ENCODE measurements at regions of chr20 and their contacts with region 1.

Region 1: GRCh38 chr20:57622579-57623377 is 2.6 kb upstream of the ZBP1 start:
- DNase-seq: peak; percentile 86
- ATAC-seq: peak; percentile 10
- H3K4me3 Mint-ChIP-seq: peak overlapping the region; percentile 36
- H3K27ac Mint-ChIP-seq: peak overlapping the region; percentile 19
- H3K4me1 Mint-ChIP-seq: peaks cover 64% of the 10 kb centered on the region
- H3K27me3 Mint-ChIP-seq: no peaks in the 10 kb centered on the region

Region 2: DNA sequence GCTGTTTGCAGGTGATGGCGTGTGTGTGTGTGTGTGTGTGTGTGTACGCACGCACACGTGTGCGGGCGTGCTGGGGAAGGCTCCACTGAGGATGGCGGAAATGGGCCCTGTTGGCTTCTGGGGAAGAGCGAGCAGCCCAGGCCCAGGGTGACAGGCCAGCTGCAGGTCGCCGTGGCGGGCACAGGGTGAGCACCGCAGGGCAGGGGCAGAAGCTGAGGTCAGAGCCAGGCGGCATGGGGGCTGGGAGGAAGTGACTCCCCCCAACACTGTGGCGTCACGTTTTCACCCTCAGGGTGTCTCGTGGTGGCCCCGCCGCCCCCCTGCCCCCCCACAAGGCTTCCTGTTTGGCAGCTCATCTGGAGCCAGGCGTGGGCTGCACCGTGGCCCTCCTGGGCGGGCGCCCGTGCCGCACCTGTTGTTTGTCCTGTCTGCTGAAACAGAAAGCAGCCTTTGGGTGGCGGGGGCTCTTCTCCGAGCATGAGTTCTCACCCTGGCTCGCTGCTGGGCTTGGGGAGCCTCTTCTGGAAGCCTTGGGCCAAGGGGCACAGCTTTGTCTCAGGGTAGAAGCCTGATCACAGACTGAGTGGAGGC is 224.5 kb before region 1 on chr20:
- CTCF ChIA-PET with region 1: interaction called, 3 read pairs
- POLR2A ChIA-PET with region 1: no interaction called
- intact Hi-C with region 1: loop called in 1 of 2 experiments (anchors 1 kb)
- DNase-seq: peak; percentile 93
- ATAC-seq: peak; percentile 69
- H3K4me3 Mint-ChIP-seq: peak overlapping the region; percentile 74
- H3K27ac Mint-ChIP-seq: peak overlapping the region; percentile 99
- H3K4me1 Mint-ChIP-seq: peaks cover 92% of the 10 kb centered on the region
- H3K27me3 Mint-ChIP-seq: no peaks in the 10 kb centered on the region

Region 3: DNA sequence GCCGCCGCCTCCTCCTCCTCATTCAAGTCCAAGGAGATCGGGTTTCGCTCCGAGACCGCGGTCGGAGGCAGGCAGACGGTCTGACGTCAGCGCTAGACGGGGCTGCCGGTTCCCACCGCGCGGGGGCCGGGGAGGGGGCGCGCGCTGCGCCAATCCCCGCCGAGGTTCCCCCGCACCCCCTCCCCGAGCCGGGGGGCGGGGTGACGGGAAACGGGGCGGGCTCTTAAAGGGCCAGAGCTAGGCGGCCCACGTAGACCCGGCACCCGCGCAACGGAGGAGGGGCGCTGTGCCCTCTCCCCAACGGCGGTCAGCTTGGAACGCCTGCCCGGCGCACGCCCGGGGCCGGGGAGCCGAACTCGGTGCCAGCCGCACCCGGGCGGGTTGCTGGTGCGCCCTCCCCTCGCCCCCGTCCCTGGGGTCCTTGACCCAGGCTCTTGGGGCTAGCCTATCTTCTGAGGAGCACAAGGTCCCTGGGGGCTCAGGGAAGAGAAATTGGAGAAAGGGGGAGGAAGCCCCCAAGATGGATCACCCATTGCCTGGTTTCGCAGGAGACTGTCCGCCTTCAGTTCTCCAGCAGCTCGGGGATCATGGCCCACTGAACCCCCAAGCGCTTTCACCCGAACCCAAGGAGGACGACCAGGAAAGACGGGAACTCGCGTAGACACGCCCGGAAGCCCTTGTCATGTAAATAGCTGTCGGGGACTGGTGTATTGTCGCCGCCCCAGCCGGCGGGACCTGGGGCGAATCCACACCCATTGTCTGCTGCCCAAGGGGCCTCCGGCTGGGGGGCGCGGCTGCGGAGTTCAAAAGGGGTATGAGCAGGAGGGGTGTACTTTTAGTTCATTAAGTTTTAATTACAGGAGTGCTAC is 87.4 kb after region 1 on chr20 and contains the start of gene PMEPA1:
- CTCF ChIA-PET with region 1: interaction called, 5 read pairs
- POLR2A ChIA-PET with region 1: interaction called, 5 read pairs
- intact Hi-C with region 1: loop called in 1 of 2 experiments (anchors 2 kb)
- DNase-seq: peak; percentile 95
- ATAC-seq: peak; percentile 91
- H3K4me3 Mint-ChIP-seq: peak within 1 kb of the TSS; percentile 79
- H3K27ac Mint-ChIP-seq: peak within 1 kb of the TSS; percentile 77
- H3K4me1 Mint-ChIP-seq: peaks cover 20% of the 10 kb centered on the region
- H3K27me3 Mint-ChIP-seq: peaks cover 6% of the 10 kb centered on the region
- total RNA-seq, gene PMEPA1: 1.6 to 1.8 TPM

Region 4: DNA sequence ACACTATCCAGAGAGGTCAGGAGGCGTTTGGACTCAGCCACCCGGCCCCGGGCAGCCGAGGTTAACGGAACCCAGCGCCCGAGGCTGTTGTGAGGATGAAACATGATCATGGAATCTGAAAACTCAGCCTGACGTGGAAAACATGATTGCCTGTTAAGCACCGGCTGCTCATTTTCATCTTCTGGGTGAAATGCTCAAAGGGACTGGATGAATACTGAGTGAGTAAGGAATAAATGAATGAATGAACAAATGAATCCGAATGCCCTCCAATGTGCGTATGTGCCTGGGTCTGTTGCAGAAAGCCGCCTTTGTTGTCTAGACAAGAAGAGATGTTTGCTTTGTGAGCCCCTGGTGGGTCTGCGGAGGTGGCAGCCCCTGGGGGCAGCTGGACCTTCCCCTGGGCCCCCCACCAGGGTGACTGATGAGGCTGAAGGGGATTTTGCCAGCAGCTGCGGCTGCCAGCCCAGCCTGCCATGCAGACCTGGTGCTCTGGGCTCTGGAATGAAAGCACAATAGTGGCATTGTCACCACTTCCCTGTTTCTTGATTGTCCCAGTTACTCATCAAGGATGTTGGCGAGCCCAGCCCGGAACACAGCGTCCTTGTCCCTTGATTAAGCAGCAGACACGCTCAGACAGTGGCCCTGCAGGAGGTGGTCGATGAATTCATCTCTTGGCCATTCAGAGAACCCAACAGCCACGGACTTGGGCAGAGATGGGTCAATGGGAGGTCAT is 394.6 kb after region 1 on chr20:
- CTCF ChIA-PET with region 1: no interaction called
- POLR2A ChIA-PET with region 1: no interaction called
- intact Hi-C with region 1: loop called in 1 of 2 experiments (anchors 1 kb)
- DNase-seq: no peak
- ATAC-seq: no peak
- H3K4me3 Mint-ChIP-seq: no peak overlapping the region
- H3K27ac Mint-ChIP-seq: no peak overlapping the region
- H3K4me1 Mint-ChIP-seq: peaks cover 16% of the 10 kb centered on the region
- H3K27me3 Mint-ChIP-seq: peaks cover 16% of the 10 kb centered on the region

Region 5: GRCh38 chr20:58224974-58225373 is 602.2 kb after region 1 on chr20:
- CTCF ChIA-PET with region 1: interaction called, 4 read pairs
- POLR2A ChIA-PET with region 1: no interaction called
- intact Hi-C with region 1: loop called in 1 of 2 experiments (anchors 1 kb)
- DNase-seq: no peak
- ATAC-seq: no peak
- H3K4me3 Mint-ChIP-seq: no peak overlapping the region
- H3K27ac Mint-ChIP-seq: no peak overlapping the region
- H3K4me1 Mint-ChIP-seq: peaks cover 31% of the 10 kb centered on the region
- H3K27me3 Mint-ChIP-seq: peaks cover 53% of the 10 kb centered on the region

Region 6: GRCh38 chr20:58818585-58819285 is 1196.0 kb after region 1 on chr20:
- CTCF ChIA-PET with region 1: no interaction called
- POLR2A ChIA-PET with region 1: no interaction called
- intact Hi-C with region 1: loop called in 1 of 2 experiments (anchors 10 kb)
- DNase-seq: peak; percentile 91
- ATAC-seq: peak; percentile 97
- H3K4me3 Mint-ChIP-seq: no peak overlapping the region
- H3K27ac Mint-ChIP-seq: no peak overlapping the region
- H3K4me1 Mint-ChIP-seq: peaks cover 16% of the 10 kb centered on the region
- H3K27me3 Mint-ChIP-seq: peaks cover 24% of the 10 kb centered on the region

Measured in activated CD4-positive, alpha-beta T cell treated with anti-CD3 and anti-CD28 coated beads for 36 hours (primary cell).